ENCODE measurements at regions of chr1 and their contacts with region 1.

Region 1: GRCh38 chr1:202017749-202018467 is 7.5 kb downstream of the ELF3 start:
- DNase-seq: no peak
- ATAC-seq: no peak

Region 2: DNA sequence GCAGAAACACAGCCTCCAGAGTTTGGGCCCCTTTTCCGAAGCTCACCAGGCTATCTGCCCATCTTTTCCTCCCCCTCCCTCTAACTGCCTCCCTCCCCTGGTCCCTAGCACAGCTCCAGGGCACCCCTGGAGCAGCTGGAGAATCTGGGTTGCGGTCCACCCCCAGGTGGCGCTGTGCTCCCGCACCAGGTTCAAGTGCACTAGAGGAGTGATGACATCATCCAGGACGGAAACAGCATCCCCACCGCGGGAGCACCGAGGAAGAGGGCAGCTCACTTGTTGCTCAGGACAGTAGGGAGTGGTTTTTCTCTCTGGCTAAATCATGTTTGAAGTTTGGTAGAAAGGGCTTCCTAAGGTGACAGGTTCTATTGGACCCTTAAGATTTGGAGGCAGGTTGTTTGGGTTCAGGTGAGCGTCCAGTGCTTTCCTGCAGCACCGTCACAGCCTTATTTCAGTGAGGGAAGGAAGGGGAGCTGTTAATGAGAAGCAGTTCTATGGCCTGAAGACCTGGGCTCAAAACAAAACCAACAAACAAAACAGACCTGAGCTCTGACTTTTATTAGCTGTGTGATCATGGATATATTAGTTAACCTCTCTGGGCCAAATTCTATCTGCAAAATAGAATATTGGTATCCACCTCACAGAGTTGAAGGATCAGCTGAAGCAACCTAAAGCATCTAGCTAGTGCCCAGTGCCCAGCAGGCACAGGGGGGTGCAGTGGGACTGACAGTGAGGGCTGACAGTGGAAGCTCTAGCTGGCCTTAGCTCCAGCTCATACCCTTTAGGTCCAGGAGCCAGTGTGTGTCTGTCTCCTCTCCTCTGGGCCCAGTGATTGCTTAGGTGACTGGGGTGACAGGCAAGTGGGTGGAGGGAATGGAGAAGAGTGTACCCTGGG is 121.7 kb before region 1 on chr1:
- intact Hi-C with region 1: no loop called
- DNase-seq: peak; percentile 89
- ATAC-seq: peak; percentile 82 to 84

Region 3: GRCh38 chr1:202085682-202086404 is 67.9 kb after region 1 on chr1:
- intact Hi-C with region 1: no loop called
- DNase-seq: peak; percentile 33
- ATAC-seq: peak; percentile 69 to 75

Region 4: GRCh38 chr1:202122639-202123335 is 104.9 kb after region 1 on chr1 and contains the start of gene GPR37L1:
- intact Hi-C with region 1: loop called in 1 of 2 experiments (anchors 2 kb)
- DNase-seq: peak; percentile 59
- ATAC-seq: peak; percentile 72 to 82
- total RNA-seq, gene GPR37L1: 0.05 to 0.21 TPM